ENCODE measurements at regions of chr16 and their contacts with region 1.

Region 1: DNA sequence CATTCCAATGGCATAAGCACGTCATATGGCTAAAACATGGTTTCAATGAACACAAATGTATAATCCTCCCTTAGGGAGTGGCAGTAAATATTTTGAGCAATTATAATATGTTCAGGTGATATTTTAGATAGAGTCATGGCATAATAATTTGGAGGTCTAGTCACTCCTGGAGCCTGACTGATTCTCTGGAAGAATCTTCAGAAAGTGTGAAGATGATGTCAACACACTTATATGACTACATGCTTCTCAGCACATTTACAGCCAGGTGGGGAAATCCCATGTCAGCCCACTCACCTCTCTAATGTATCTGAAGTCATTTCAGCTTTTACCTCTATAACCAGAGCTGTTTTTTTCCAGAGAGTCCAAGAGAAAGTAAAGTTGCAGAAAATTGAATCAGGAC is 474.8 kb downstream of the SHISA9 start:
- DNase-seq: no peak
- H3K4me3 ChIP-seq: no peak overlapping the region
- H3K27ac ChIP-seq: no peak overlapping the region
- H3K4me1 ChIP-seq: peaks cover 10% of the 10 kb centered on the region
- H3K27me3 ChIP-seq: no peaks in the 10 kb centered on the region
- CTCF ChIP-seq: no peak

Region 2: GRCh38 chr16:11819798-11820197 is 1556.4 kb before region 1 on chr16:
- CTCF ChIA-PET with region 1: no interaction called
- POLR2A ChIA-PET with region 1: no interaction called
- intact Hi-C with region 1: no loop called
- DNase-seq: no peak
- H3K4me3 ChIP-seq: no peak overlapping the region
- H3K27ac ChIP-seq: no peak overlapping the region
- H3K4me1 ChIP-seq: peaks cover 12% of the 10 kb centered on the region
- H3K27me3 ChIP-seq: no peaks in the 10 kb centered on the region
- CTCF ChIP-seq: no peak

Region 3: GRCh38 chr16:13099822-13100221 is 276.4 kb before region 1 on chr16:
- CTCF ChIA-PET with region 1: no interaction called
- POLR2A ChIA-PET with region 1: no interaction called
- intact Hi-C with region 1: no loop called
- DNase-seq: no peak
- H3K4me3 ChIP-seq: no peak overlapping the region
- H3K27ac ChIP-seq: no peak overlapping the region
- H3K4me1 ChIP-seq: peaks cover 17% of the 10 kb centered on the region
- H3K27me3 ChIP-seq: no peaks in the 10 kb centered on the region
- CTCF ChIP-seq: no peak

Region 4: GRCh38 chr16:13245713-13246377 is 130.3 kb before region 1 on chr16:
- CTCF ChIA-PET with region 1: no interaction called
- POLR2A ChIA-PET with region 1: no interaction called
- intact Hi-C with region 1: no loop called
- DNase-seq: no peak
- H3K4me3 ChIP-seq: no peak overlapping the region
- H3K27ac ChIP-seq: no peak overlapping the region
- H3K4me1 ChIP-seq: no peaks in the 10 kb centered on the region
- H3K27me3 ChIP-seq: no peaks in the 10 kb centered on the region
- CTCF ChIP-seq: no peak

Region 5: GRCh38 chr16:13392341-13392740 is 16.2 kb after region 1 on chr16:
- CTCF ChIA-PET with region 1: interaction called, 13 read pairs
- POLR2A ChIA-PET with region 1: no interaction called
- intact Hi-C with region 1: no loop called
- DNase-seq: no peak
- H3K4me3 ChIP-seq: no peak overlapping the region
- H3K27ac ChIP-seq: no peak overlapping the region
- H3K4me1 ChIP-seq: no peaks in the 10 kb centered on the region
- H3K27me3 ChIP-seq: no peaks in the 10 kb centered on the region
- CTCF ChIP-seq: no peak

Region 6: DNA sequence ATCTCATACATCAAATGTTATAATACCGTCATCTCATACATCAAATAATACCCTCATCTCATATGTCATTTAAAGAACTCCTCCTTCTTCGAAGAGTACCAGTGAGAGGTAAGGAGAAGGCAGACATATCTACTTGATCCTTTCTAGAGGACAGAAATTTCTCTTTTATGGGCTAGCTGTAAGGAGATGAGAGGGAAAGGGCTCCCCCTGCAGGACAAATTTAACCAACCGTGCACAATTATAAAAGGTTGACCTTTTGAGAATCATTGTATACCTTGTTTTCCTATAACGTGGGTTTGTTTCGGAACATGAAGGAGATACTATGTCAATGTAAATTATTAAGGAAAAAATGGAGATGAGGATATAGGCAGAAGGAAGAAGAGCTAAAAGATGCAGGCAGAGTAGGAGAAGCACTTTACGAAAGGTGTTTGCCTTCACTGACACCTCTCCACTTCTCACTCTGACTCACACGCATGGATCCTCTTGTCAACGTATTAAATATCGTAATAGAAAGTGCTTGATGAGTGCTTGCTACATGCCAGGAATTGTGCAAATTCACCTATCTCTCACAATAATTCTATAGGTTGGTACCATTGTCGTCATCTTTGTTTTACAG is 77.9 kb after region 1 on chr16:
- CTCF ChIA-PET with region 1: no interaction called
- POLR2A ChIA-PET with region 1: no interaction called
- intact Hi-C with region 1: loop called (anchors 5 kb)
- DNase-seq: peak in 1 of 2 experiments; percentile 56
- H3K4me3 ChIP-seq: no peak overlapping the region
- H3K27ac ChIP-seq: no peak overlapping the region
- H3K4me1 ChIP-seq: no peaks in the 10 kb centered on the region
- H3K27me3 ChIP-seq: no peaks in the 10 kb centered on the region
- CTCF ChIP-seq: peak; percentile 90